SK-N-SH (cell line): ENCODE measurements at regions of chr2 and their contacts with region 1.

Region 1: DNA sequence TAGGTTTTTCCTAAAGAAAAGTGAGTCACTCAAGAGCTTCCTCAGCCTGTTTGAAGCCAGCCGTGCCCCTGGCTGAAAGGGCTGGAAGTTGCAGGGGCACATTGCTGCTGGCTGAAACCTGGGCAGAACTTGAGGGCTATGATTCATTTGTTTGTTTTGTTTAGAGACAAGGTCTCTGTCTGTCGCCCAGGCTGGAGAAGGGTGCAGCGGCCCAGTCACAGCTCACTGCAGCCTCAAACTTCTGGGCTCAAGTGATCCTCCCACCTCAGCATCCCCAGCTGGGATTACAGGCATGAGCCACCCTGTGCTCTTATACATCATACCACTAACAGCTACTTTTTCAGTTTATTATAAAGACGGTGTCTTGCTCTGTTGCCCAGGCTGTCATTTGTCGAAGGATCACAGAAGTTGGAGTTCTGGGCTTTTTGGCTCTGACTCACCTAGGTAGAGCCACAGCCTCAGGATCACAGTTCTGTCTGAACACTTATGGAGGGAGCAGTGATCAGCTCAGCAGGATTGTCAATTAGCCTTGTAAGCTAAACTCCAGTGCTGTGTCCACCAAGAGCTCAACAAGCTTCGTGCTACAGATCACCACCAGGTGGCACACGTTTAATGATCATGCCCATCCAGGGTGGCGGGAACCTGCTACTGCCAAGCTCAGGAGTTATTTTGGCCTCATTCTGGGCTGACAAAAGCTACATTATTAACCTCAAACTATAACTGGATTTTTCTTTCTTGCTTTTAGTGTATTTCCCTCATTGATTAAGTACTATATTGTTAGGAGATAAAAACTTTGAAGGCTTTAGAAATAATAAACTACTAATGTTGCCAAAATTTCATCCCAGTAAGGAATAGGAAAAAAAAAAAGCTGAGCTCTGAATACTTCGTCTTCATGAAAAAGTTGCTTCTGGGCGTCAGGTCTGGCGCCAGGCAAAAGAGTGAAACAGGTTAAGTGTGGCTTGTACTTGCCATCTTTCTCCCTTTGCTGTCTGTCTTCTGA is 57.9 kb downstream of the ARHGEF33 start:
- DNase-seq: peak; percentile 84
- H3K4me3 ChIP-seq: no peak overlapping the region; a peak in 1 of 4 replicates
- H3K27ac ChIP-seq: peak overlapping the region in 1 of 2 experiments; percentile 32; a peak in 2 of 4 replicates
- H3K4me1 ChIP-seq: 0 out of 4 replicates have a peak, but pooled peaks cover 0 to 7% of the 10 kb centered on the region in 2 experiments
- H3K27me3 ChIP-seq: no peaks in the 10 kb centered on the region
- CTCF ChIP-seq: peak; percentile 87
- EP300 ChIP-seq: no peak
- RAD21 ChIP-seq: peak; percentile 78

Region 2: DNA sequence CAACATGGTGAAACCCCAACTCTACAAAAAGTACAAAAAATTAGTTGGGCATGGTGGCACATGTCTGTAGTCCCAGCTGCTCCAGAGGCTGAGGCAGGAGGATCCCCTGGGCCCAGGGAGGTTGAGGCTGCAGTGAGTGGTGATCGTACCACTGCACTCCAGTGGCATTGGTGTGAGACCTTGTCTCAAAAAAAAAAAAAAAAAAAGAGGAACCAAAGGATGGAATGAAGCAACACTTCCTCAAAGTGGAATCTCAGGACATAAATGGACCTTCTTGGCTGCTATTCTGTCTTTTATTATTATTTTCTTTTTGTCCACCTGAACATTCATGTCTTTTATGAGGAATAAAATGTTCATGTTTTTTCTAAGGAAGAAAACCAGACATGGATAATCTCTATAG is 155.8 kb before region 1 on chr2:
- CTCF ChIA-PET with region 1: no interaction called
- POLR2A ChIA-PET with region 1: no interaction called
- DNase-seq: no peak
- H3K4me3 ChIP-seq: no peak overlapping the region
- H3K27ac ChIP-seq: no peak overlapping the region
- H3K4me1 ChIP-seq: no peaks in the 10 kb centered on the region
- H3K27me3 ChIP-seq: no peaks in the 10 kb centered on the region
- CTCF ChIP-seq: no peak
- EP300 ChIP-seq: no peak
- RAD21 ChIP-seq: no peak

Region 3: GRCh38 chr2:38935568-38936172 is 11.9 kb before region 1 on chr2:
- CTCF ChIA-PET with region 1: interaction called, 54 read pairs
- POLR2A ChIA-PET with region 1: no interaction called
- DNase-seq: no peak
- H3K4me3 ChIP-seq: peak overlapping the region in 1 of 2 experiments; percentile 43; a peak in 2 of 4 replicates
- H3K27ac ChIP-seq: peak overlapping the region in 1 of 2 experiments; percentile 44; a peak in 2 of 4 replicates
- H3K4me1 ChIP-seq: peaks cover 4 to 6% of the 10 kb centered on the region in 2 experiments; a peak in 1 of 4 replicates
- H3K27me3 ChIP-seq: no peaks in the 10 kb centered on the region
- CTCF ChIP-seq: no peak
- EP300 ChIP-seq: no peak
- RAD21 ChIP-seq: no peak

Region 4: GRCh38 chr2:38966006-38966405 is 18.5 kb after region 1 on chr2:
- CTCF ChIA-PET with region 1: interaction called, 76 read pairs
- POLR2A ChIA-PET with region 1: no interaction called
- DNase-seq: no peak
- H3K4me3 ChIP-seq: no peak overlapping the region
- H3K27ac ChIP-seq: no peak overlapping the region
- H3K4me1 ChIP-seq: no peaks in the 10 kb centered on the region; a peak in 1 of 4 replicates
- H3K27me3 ChIP-seq: no peaks in the 10 kb centered on the region
- CTCF ChIP-seq: no peak
- EP300 ChIP-seq: no peak
- RAD21 ChIP-seq: no peak

Region 5: DNA sequence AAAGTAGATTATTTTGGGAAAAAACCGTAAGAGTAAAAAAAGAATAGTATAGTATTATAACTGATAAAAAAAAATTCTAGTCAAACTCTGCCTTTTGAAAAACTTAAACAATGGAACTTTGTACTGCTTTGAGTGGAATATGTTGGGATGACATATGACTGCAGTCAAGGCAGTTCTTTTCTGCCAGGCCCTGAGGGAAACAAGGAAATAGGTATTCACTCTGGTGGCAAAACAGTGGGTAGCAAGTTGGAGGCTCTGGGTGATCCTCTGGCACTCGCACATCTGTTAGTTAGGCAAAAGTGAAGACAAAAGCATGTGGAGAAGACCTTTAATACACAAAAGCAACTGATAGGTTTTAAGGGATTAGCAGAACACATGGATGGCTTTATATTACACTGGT is 44.4 kb after region 1 on chr2:
- CTCF ChIA-PET with region 1: interaction called, 14 read pairs
- POLR2A ChIA-PET with region 1: no interaction called
- DNase-seq: no peak
- H3K4me3 ChIP-seq: no peak overlapping the region
- H3K27ac ChIP-seq: no peak overlapping the region
- H3K4me1 ChIP-seq: no peaks in the 10 kb centered on the region
- H3K27me3 ChIP-seq: no peaks in the 10 kb centered on the region
- CTCF ChIP-seq: no peak
- EP300 ChIP-seq: no peak
- RAD21 ChIP-seq: no peak

Region 6: GRCh38 chr2:39059366-39059952 is 111.9 kb after region 1 on chr2:
- CTCF ChIA-PET with region 1: interaction called, 19 read pairs
- POLR2A ChIA-PET with region 1: no interaction called
- DNase-seq: peak; percentile 48
- H3K4me3 ChIP-seq: no peak overlapping the region
- H3K27ac ChIP-seq: 0 out of 4 replicates have a peak overlapping the region, but pooled peaks of 1 of the 2 experiments have one; percentile 8
- H3K4me1 ChIP-seq: peaks cover 0 to 3% of the 10 kb centered on the region in 2 experiments; a peak in 2 of 4 replicates
- H3K27me3 ChIP-seq: no peaks in the 10 kb centered on the region
- CTCF ChIP-seq: peak; percentile 96
- EP300 ChIP-seq: no peak
- RAD21 ChIP-seq: peak; percentile 85

Region 7: DNA sequence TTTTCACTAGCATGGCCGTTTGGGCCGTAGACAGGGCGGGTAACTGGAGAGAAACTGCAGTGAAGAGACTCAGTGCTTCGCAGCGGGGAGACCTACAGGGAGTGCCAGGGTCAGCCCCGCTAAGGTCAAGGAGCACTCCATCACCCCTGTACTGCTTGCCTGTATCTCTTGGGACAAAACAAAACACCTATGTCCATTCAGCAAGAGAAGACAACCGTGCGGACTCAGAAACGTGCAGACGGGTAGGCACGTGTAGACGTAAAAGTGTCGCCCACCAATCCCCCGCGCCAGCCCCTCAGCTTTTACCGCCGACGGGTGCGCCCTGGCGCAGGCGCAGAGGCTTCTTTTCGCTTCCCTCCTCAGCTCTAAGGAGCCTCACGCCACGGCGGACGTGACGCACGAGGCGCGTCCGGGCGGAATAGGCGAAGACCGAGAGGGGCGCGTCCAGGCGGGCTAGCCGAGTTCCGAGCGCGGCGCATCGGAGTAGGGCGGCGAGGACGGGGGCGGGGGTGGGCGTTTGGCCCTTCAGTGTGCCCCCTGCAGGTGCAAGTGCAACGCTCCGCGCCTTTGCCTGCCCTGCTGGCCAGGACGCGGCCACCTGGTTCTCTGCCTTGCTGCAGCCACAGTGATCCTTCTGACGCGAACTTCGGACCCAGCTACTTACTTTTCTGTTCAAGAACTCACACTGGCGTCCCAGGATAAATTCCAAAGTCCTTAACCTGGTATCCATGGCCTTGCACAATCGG is 176.6 kb after region 1 on chr2:
- CTCF ChIA-PET with region 1: interaction called, 11 read pairs
- POLR2A ChIA-PET with region 1: no interaction called
- DNase-seq: peak; percentile 95
- H3K4me3 ChIP-seq: peak overlapping the region; percentile 87 to 89
- H3K27ac ChIP-seq: peak overlapping the region; percentile 70 to 97
- H3K4me1 ChIP-seq: peaks cover 6 to 34% of the 10 kb centered on the region in 2 experiments; a peak in 3 of 4 replicates
- H3K27me3 ChIP-seq: no peaks in the 10 kb centered on the region
- CTCF ChIP-seq: peak; percentile 68
- EP300 ChIP-seq: peak in 1 of 2 experiments; percentile 48; a peak in 1 of 4 replicates
- RAD21 ChIP-seq: peak; percentile 41; the same call in 1 of the 2 replicates

Region 8: DNA sequence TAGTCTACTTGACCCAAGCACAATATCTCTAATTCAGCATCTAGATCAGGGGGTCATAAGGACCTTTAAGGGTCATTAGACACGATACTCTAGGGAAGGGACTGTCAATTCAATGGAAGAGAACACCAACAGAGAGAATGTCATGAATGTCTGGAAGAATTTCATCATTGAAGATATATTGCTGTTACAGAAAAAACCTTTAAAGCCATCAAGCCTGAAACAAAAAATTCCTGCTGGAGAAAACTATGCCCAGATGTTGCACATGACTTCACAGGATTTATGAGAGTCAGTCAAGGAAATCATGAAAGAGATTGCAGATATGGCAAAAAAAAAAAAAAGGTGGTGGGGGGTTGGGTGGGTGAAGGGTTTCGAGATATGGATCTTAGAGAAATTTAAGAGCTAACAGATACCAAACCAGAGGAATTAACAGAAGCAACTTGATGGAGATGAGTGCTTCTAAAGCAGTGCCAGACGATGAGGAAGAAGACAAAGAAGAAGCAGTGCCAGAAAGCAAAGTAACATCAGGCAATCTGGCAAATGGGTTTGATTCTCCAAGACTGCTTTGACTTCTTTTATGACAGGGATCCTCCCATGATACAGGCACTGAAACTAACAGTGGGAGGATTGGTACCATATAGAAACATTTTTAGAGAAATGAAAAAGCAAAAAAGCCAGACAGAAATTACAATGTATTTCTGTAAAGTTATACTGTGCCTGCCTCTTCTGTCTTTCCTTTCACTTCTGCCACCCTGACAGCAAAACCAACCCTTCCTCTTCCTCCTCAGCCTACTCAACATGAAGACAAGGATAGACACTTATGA is 461.0 kb after region 1 on chr2:
- CTCF ChIA-PET with region 1: no interaction called
- POLR2A ChIA-PET with region 1: no interaction called
- DNase-seq: no peak
- H3K4me3 ChIP-seq: no peak overlapping the region
- H3K27ac ChIP-seq: no peak overlapping the region; a peak in 1 of 4 replicates
- H3K4me1 ChIP-seq: peaks cover 12 to 47% of the 10 kb centered on the region in 2 experiments; a peak in 3 of 4 replicates
- H3K27me3 ChIP-seq: no peaks in the 10 kb centered on the region
- CTCF ChIP-seq: no peak
- EP300 ChIP-seq: no peak
- RAD21 ChIP-seq: no peak